ENCODE measurements at regions of chr1 and their contacts with region 1.

Region 1: DNA sequence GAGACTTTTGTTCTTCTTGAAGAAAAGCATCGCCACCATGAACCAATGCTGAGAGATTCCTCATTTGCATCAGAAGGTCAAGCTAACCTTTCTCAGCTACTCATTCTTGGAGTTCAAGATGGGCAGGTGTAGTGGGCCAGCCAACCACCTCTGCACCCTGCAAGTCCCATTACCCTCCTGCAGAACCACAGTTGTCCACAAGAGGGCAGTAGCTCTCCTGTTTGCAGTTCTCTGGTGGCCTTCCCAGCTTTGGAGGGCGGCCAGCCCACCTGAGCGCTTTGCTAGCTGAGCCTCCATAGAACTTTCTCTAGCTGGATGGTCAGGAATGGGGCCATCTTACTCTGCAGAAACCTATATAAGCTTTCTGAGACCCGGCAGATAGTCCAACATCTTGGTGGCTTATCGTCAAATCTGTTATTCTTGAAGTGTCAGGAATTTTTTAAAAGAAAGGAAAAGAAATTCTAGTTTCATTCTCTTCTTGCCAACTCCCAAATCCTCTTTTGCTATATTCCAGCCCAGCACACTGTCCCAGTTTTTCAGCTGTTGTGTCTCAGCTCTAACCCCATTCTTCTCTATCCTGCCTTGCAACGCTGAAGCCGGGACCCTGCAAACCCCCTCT is 11.0 kb upstream of the LMX1A start:
- DNase-seq: peak; percentile 79 to 86
- ATAC-seq: peak; percentile 33 to 66 (median 48)
- H3K4me3 ChIP-seq: no peak overlapping the region
- H3K27ac ChIP-seq: no peak overlapping the region
- H3K4me1 ChIP-seq: no peaks in the 10 kb centered on the region
- H3K27me3 ChIP-seq: no peaks in the 10 kb centered on the region
- CTCF ChIP-seq: peak; percentile 96

Region 2: DNA sequence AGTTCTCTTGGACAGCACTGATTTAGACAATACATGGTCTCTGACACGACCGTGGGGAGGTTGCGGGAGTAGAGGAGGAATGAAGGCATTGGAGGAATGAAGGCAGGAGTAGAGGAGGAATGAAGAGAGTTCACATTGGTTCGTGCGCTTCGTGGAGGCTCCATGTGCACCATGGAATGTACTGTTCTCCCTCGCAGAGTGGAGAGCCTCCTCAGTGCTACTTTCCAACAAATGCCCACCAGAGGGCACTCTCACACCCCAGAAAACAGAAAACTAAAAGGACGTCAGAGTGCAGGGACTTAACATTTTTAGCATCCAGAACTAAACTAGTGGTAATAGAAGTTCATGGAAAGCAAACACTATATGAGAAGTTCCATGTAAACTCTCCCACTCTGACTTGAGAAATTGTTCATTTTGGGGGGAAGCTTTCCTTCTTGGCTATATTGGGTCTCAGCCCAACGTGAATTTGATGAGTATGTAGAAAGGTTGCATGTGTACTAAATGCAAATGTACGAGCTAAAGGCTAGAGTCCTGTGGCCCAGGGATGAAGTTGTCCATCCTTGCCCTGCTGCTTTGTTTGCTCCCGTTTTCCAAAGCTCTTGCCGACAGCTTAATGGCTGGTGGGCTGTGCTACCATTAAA is 222.6 kb before region 1 on chr1:
- intact Hi-C with region 1: loop called (anchors 5 kb)
- DNase-seq: peak; percentile 25 to 53
- ATAC-seq: peak; percentile 53 to 92 (median 79)
- H3K4me3 ChIP-seq: no peak overlapping the region
- H3K27ac ChIP-seq: no peak overlapping the region
- H3K4me1 ChIP-seq: no peaks in the 10 kb centered on the region
- H3K27me3 ChIP-seq: peaks cover 2 to 6% (median 2%) of the 10 kb centered on the region in 3 donors
- CTCF ChIP-seq: peak; percentile 79

Measured in psoas muscle (tissue), 8 donors.